ENCODE measurements at regions of chr14 and their contacts with region 1.

Region 1: DNA sequence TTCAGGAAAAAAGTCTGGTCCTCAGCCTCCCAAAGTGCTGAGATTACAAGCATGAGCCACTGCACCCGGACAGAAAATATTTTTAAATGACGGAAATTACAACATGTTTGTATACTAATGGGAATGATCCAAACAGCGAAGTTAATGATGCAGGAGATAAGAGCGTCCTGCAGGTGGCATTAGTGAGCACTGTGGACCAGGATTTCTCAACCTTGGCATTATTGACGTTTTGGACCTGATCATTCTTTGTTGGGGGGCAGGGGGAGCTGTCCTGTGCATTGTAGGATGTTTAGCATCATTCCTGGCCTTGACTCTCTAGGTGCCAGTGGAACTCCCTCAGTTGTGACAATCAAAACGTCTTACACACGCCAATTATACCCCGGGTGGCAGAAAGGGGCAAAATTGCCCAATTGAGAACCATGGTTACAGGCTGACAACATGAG is 34.1 kb downstream of the SCFD1 start:
- DNase-seq: peak in 1 of 2 donors; percentile 12
- ATAC-seq: peak in 3 of 8 donors; percentile 48 to 66 (median 52)
- H3K4me3 ChIP-seq: no peak overlapping the region
- H3K27ac ChIP-seq: no peak overlapping the region
- H3K4me1 ChIP-seq: no peaks in the 10 kb centered on the region
- H3K27me3 ChIP-seq: no peaks in the 10 kb centered on the region
- CTCF ChIP-seq: peak; percentile 41 to 77 (median 71)

Region 2: GRCh38 chr14:30698463-30698862 is 42.3 kb after region 1 on chr14:
- intact Hi-C with region 1: no loop called
- DNase-seq: no peak
- ATAC-seq: no peak
- H3K4me3 ChIP-seq: no peak overlapping the region
- H3K27ac ChIP-seq: no peak overlapping the region
- H3K4me1 ChIP-seq: no peaks in the 10 kb centered on the region
- H3K27me3 ChIP-seq: no peaks in the 10 kb centered on the region
- CTCF ChIP-seq: no peak

Region 3: GRCh38 chr14:30725763-30726162 is 69.6 kb after region 1 on chr14:
- intact Hi-C with region 1: loop called in 1 of 10 experiments (anchors 2 kb)
- DNase-seq: no peak
- ATAC-seq: peak in 5 of 8 donors; percentile 14 to 75 (median 35)
- H3K4me3 ChIP-seq: no peak overlapping the region
- H3K27ac ChIP-seq: no peak overlapping the region
- H3K4me1 ChIP-seq: peaks cover 0 to 12% (median 8%) of the 10 kb centered on the region in 9 donors
- H3K27me3 ChIP-seq: no peaks in the 10 kb centered on the region
- CTCF ChIP-seq: no peak

Region 4: GRCh38 chr14:30751641-30752416 is 95.6 kb after region 1 on chr14:
- intact Hi-C with region 1: loop called in 1 of 10 experiments (anchors 10 kb)
- DNase-seq: no peak
- ATAC-seq: no peak
- H3K4me3 ChIP-seq: no peak overlapping the region
- H3K27ac ChIP-seq: no peak overlapping the region
- H3K4me1 ChIP-seq: no peaks in the 10 kb centered on the region
- H3K27me3 ChIP-seq: no peaks in the 10 kb centered on the region
- CTCF ChIP-seq: no peak

Region 5: DNA sequence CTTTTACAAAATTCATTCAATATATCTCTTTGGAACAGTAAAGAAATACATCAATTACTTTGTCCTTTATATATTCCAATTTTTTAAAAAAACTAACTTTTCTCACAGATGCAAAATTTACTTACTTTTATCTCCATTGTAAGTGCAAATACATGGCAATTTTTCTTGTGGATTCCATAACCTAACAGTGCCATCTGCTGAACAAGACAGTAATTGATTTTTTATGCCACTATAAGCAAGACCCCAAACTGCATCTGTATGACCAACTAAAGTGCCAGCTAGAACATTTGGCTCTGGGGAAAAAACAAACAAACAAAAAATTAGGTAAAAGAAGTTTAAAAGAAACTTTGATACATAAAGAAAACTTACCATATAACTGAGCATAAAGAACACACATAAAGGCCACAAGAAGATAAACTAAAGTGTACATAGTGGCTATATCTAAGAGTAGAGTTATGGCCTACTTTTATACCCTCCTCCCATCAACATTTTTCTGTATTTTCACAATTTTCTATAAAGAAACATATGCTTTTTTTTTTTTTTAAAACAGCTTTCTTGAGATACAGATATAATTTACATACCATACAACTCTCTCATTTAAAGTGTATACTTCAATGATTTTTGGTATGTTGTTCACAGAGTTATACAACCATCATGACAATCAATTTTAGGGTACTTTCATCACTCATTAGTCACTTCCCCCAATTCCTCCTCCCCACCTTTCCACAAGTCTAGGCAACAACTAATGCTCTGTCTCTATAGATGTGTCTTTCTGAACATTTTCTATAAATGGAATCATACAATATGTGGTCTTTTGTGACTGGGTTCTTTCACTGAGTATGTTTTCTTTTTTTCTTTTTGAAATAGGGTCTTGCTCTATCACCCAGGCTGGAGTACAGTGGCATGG is 250.8 kb after region 1 on chr14:
- intact Hi-C with region 1: loop called in 5 of 10 experiments (anchors 5 to 10 kb)
- DNase-seq: no peak
- ATAC-seq: no peak
- H3K4me3 ChIP-seq: no peak overlapping the region
- H3K27ac ChIP-seq: no peak overlapping the region
- H3K4me1 ChIP-seq: no peaks in the 10 kb centered on the region
- H3K27me3 ChIP-seq: no peaks in the 10 kb centered on the region
- CTCF ChIP-seq: peak in 6 of 9 donors; percentile 19 to 46 (median 31)